Activated T-helper 2 cell treated with anti-CD3 and anti-CD28 coated beads, Interferon-gamma antibody, Interleukin-2, Interleukin-4, amounts not matched to agents 10 μg/mL and 5 μg/mL and 100 μg/mL, durations not matched to agents 14 hours and 24 hours and 36 hours (primary cell): ENCODE measurements at regions of chr3 and their contacts with region 1.

Region 1: GRCh38 chr3:153621953-153622352 is 459.9 kb downstream of the RAP2B start:
- DNase-seq: no peak
- H3K4me3 Mint-ChIP-seq: peak overlapping the region; percentile 47
- H3K27ac Mint-ChIP-seq: peak overlapping the region; percentile 89
- H3K4me1 Mint-ChIP-seq: peaks cover 54% of the 10 kb centered on the region
- H3K27me3 Mint-ChIP-seq: no peaks in the 10 kb centered on the region

Region 2: DNA sequence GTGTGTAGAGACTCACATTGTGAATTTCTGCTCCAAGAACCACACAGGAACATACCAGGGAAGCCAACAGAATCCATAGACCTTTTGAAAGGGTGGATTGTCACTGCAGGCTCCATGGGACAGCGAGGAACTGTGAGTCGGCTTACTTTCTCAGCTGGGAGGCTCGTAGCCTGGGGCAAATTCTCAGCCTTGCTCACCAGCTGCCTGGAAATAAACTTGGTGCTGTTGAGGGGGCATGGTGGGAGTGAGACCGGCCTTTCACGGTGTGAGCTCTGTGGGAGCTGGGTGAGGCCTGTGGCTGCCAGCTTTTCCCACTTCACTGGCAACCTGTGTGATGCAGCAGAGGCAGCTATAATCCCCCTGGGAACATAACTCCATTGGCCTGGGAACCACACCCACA is 933.6 kb before region 1 on chr3:
- intact Hi-C with region 1: loop called (anchors 2 kb)
- DNase-seq: no peak
- H3K4me3 Mint-ChIP-seq: no peak overlapping the region
- H3K27ac Mint-ChIP-seq: no peak overlapping the region
- H3K4me1 Mint-ChIP-seq: peaks cover 22% of the 10 kb centered on the region
- H3K27me3 Mint-ChIP-seq: no peaks in the 10 kb centered on the region

Region 3: GRCh38 chr3:153138276-153139210 is 483.4 kb before region 1 on chr3:
- intact Hi-C with region 1: loop called (anchors 1 kb)
- DNase-seq: peak; percentile 34
- H3K4me3 Mint-ChIP-seq: no peak overlapping the region
- H3K27ac Mint-ChIP-seq: peak overlapping the region; percentile 72
- H3K4me1 Mint-ChIP-seq: peaks cover 17% of the 10 kb centered on the region
- H3K27me3 Mint-ChIP-seq: no peaks in the 10 kb centered on the region

Region 4: GRCh38 chr3:153221748-153222162 is 400.2 kb before region 1 on chr3:
- intact Hi-C with region 1: loop called (anchors 5 kb)
- DNase-seq: peak; percentile 78
- H3K4me3 Mint-ChIP-seq: peak overlapping the region; percentile 38
- H3K27ac Mint-ChIP-seq: peak overlapping the region; percentile 85
- H3K4me1 Mint-ChIP-seq: peaks cover 46% of the 10 kb centered on the region
- H3K27me3 Mint-ChIP-seq: no peaks in the 10 kb centered on the region

Region 5: GRCh38 chr3:153313302-153313965 is 308.5 kb before region 1 on chr3:
- intact Hi-C with region 1: no loop called
- DNase-seq: no peak
- H3K4me3 Mint-ChIP-seq: no peak overlapping the region
- H3K27ac Mint-ChIP-seq: no peak overlapping the region
- H3K4me1 Mint-ChIP-seq: peaks cover 7% of the 10 kb centered on the region
- H3K27me3 Mint-ChIP-seq: no peaks in the 10 kb centered on the region

Region 6: DNA sequence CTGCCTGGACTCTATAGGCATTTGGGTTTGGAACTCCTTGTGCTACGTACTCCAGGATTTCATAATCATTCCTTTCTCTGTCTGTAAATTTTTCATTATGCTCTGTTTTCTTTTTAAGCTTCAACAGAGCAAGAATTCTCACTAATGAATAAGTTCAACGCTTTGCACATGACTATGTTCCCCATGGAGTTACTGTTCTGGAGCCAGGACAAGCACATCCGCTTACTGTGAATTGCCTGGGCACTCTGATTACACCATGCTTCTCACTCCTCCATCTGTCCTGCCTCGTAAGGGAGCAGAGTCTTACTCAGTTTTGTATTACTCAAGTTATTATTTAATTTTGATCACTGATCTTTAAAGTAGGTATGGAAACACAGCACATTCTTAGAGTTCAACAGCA is 12.7 kb after region 1 on chr3:
- intact Hi-C with region 1: loop called (anchors 1 kb)
- DNase-seq: no peak
- H3K4me3 Mint-ChIP-seq: no peak overlapping the region
- H3K27ac Mint-ChIP-seq: no peak overlapping the region
- H3K4me1 Mint-ChIP-seq: peaks cover 38% of the 10 kb centered on the region
- H3K27me3 Mint-ChIP-seq: no peaks in the 10 kb centered on the region

Region 7: GRCh38 chr3:153652076-153652475 is 30.1 kb after region 1 on chr3:
- intact Hi-C with region 1: no loop called
- DNase-seq: no peak
- H3K4me3 Mint-ChIP-seq: no peak overlapping the region
- H3K27ac Mint-ChIP-seq: no peak overlapping the region
- H3K4me1 Mint-ChIP-seq: no peaks in the 10 kb centered on the region
- H3K27me3 Mint-ChIP-seq: peaks cover 3% of the 10 kb centered on the region

Region 8: GRCh38 chr3:153673853-153674252 is 51.9 kb after region 1 on chr3:
- intact Hi-C with region 1: loop called (anchors 2 kb)
- DNase-seq: no peak
- H3K4me3 Mint-ChIP-seq: no peak overlapping the region
- H3K27ac Mint-ChIP-seq: no peak overlapping the region
- H3K4me1 Mint-ChIP-seq: peaks cover 10% of the 10 kb centered on the region
- H3K27me3 Mint-ChIP-seq: peaks cover 2% of the 10 kb centered on the region

Region 9: DNA sequence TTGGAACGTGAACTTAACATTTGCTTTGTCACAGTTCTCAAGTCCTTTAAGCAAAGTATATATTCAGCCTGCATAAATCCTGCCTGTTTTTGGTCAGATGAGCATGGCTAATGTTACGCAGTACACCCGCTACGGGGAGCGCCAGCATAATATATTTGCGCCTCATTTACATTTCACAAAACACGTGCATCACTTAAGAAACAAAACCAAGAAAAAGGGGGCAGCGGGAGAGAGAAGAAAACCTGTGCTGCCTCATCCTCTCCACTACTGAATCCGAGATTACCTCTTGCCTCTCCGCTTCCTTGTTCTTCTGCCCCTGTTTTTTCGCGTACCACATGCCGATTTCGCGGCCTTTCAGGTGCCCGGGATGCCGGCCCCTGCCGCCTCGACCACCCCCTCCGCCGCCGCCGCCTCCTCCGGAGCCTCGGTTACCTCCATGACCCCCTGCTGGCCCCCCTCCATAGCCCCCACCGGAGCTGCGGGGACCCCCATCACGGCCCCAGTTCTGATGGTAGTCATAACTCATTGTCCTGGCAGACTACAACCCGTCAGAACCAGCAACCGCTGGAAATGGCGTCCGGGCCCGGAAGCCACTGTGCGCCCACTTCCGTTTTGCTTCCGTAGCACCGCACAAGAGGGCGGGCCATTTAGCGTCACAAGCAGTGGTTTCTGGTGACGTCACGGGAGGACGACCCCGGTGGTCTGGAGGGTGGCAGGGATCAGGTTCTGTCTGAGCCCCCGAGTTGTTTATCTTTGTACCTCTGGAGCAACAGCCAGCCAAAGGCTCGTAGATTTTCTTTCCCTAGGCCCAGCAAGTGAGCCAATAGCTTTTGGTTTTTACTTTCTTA is 702.2 kb after region 1 on chr3 and contains the start of gene DHX36:
- intact Hi-C with region 1: loop called (anchors 10 kb)
- DNase-seq: peak; percentile 85
- H3K4me3 Mint-ChIP-seq: peak within 1 kb of the TSS; percentile 90
- H3K27ac Mint-ChIP-seq: peak within 1 kb of the TSS; percentile 96
- H3K4me1 Mint-ChIP-seq: peaks cover 28% of the 10 kb centered on the region
- H3K27me3 Mint-ChIP-seq: peaks cover 6% of the 10 kb centered on the region
- total RNA-seq, gene DHX36: 82.1 and 88.5 TPM in 2 replicates